Tibial artery (tissue), 4 donors: ENCODE measurements at regions of chr10 and their contacts with region 1.

Region 1: DNA sequence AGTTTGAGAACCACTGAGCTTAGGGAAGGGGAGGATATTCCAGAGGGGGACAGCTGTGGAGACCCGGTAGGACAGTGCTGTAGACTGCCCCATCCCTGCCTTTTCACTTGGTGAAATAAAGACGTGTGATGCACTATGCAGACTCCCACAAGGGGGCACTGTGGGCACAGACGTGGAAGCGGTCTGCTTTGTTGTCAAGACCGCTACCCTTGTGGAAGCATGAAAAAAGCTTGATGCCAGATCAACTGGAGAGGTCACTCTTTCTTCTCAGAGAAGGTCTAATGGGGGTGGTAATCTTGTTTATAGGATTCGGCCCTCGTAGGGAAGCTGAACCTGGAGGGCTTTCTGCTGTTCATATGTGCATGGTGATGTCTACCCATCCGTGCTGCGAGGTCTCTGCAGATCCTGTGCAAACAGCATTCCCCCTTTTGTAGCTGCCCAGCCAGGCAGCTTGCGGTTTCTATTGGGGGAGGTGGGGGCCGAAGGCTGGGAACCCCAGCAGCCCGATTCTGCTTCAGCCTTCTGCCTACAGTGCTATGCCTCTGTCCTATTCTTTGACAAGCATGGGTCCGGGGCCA is 13.7 kb downstream of the RPS24 start:
- DNase-seq: peak; percentile 88
- H3K4me3 ChIP-seq: no peak overlapping the region
- H3K27ac ChIP-seq: no peak overlapping the region
- H3K4me1 ChIP-seq: peaks cover 0 to 18% (median 8%) of the 10 kb centered on the region in 4 donors
- H3K27me3 ChIP-seq: no peaks in the 10 kb centered on the region
- CTCF ChIP-seq: peak; percentile 89 to 90

Region 2: DNA sequence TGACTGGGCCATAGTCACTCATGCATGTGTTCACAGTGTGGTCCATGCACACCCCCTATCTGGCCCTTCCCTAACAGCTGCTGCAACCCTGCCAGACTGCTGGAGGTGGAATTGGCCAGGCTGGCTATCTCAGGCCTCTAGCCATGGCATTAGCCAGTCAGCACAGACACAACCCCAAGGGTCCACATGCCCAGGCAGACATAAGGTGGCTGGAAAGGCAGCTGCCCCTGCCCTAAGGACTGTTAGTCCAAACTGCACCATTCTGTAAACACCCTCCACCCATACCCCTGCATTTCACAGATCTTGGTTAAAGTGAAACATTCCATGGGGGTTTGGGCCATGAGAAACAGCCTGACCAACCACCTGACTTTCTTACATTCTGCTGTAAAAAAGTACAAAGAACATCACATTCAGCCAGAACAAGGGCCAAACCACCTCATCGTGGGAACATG is 272.4 kb before region 1 on chr10:
- intact Hi-C with region 1: no loop called
- DNase-seq: no peak
- H3K4me3 ChIP-seq: no peak overlapping the region
- H3K27ac ChIP-seq: no peak overlapping the region
- H3K4me1 ChIP-seq: no peaks in the 10 kb centered on the region
- H3K27me3 ChIP-seq: no peaks in the 10 kb centered on the region
- CTCF ChIP-seq: no peak

Region 3: GRCh38 chr10:78211561-78212051 is 164.2 kb after region 1 on chr10:
- intact Hi-C with region 1: loop called (anchors 10 kb)
- DNase-seq: no peak
- H3K4me3 ChIP-seq: no peak overlapping the region
- H3K27ac ChIP-seq: no peak overlapping the region
- H3K4me1 ChIP-seq: peaks cover 0 to 30% (median 22%) of the 10 kb centered on the region in 4 donors
- H3K27me3 ChIP-seq: no peaks in the 10 kb centered on the region
- CTCF ChIP-seq: peak; percentile 55 to 57

Region 4: GRCh38 chr10:78302989-78303854 is 255.8 kb after region 1 on chr10:
- intact Hi-C with region 1: loop called (anchors 5 kb)
- DNase-seq: peak; percentile 90 to 96
- H3K4me3 ChIP-seq: peak overlapping the region; percentile 60
- H3K27ac ChIP-seq: peak overlapping the region; percentile 78 to 89
- H3K4me1 ChIP-seq: peaks cover 4 to 14% (median 10%) of the 10 kb centered on the region in 4 donors
- H3K27me3 ChIP-seq: no peaks in the 10 kb centered on the region
- CTCF ChIP-seq: peak; percentile 74 to 87

Region 5: GRCh38 chr10:78657163-78657861 is 609.9 kb after region 1 on chr10:
- intact Hi-C with region 1: loop called (anchors 5 kb)
- DNase-seq: peak; percentile 83 to 88
- H3K4me3 ChIP-seq: no peak overlapping the region
- H3K27ac ChIP-seq: no peak overlapping the region
- H3K4me1 ChIP-seq: no peaks in the 10 kb centered on the region
- H3K27me3 ChIP-seq: no peaks in the 10 kb centered on the region
- CTCF ChIP-seq: peak; percentile 58 to 67